Left colon (tissue), 2 donors: ENCODE measurements at regions of chr1 and their contacts with region 1.

Region 1: DNA sequence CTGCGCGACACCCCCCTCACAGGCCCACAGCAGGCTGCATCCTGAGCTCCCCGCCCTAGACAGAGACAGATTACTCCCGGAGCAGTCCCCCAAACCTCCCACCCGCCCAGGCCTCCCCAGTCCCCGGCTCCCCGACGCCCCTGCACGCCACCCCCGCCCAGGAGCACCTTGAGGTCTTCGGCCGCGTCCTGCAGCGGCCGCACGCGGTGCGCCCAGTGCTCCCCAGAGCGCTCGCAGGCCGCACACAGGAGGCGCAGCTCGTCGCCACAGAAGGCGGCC is 709 bp downstream of the TRIM11 start:
- DNase-seq: no peak
- ATAC-seq: peak; percentile 54

Region 2: GRCh38 chr1:228358039-228358763 is 47.7 kb before region 1 on chr1:
- intact Hi-C with region 1: no loop called
- DNase-seq: no peak
- ATAC-seq: no peak

Region 3: DNA sequence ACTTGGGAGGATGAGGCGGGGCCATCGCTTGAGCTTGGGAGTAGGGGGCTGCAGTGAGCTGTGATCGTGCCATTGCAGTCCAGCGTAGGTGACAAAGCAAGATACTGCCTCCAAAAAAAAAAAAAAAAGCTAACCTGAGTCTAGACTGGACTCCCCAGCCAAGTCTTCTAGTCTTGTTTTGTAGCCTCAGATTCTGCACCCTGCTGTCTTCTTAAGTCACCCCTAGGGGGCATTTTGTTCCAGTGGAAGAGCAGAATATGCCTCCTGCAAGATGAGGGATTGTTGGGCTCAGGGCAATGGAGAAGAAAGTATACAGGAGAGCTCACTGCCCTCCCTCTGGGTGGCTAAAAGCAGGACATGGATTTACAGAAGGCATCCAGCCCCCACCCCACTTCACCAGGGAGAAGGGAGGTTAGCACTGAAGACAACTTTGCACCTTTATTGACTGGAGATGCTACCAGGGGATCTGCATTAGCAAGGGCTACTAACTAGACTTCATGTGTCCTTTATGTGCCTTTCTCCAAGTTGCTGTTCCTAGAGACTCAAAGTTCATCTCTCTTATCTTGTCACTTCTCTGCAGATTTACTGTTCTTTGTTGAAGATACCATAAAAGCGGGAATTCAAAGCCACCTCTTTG is 66.0 kb after region 1 on chr1:
- intact Hi-C with region 1: loop called in 1 of 2 experiments (anchors 10 kb)
- DNase-seq: no peak
- ATAC-seq: peak; percentile 49

Region 4: GRCh38 chr1:228500901-228501871 is 95.3 kb after region 1 on chr1:
- intact Hi-C with region 1: no loop called
- DNase-seq: peak; percentile 72 to 87
- ATAC-seq: peak; percentile 95